Heart left ventricle (tissue), 16 donors: ENCODE measurements at regions of chr11 and their contacts with region 1.

Region 1: DNA sequence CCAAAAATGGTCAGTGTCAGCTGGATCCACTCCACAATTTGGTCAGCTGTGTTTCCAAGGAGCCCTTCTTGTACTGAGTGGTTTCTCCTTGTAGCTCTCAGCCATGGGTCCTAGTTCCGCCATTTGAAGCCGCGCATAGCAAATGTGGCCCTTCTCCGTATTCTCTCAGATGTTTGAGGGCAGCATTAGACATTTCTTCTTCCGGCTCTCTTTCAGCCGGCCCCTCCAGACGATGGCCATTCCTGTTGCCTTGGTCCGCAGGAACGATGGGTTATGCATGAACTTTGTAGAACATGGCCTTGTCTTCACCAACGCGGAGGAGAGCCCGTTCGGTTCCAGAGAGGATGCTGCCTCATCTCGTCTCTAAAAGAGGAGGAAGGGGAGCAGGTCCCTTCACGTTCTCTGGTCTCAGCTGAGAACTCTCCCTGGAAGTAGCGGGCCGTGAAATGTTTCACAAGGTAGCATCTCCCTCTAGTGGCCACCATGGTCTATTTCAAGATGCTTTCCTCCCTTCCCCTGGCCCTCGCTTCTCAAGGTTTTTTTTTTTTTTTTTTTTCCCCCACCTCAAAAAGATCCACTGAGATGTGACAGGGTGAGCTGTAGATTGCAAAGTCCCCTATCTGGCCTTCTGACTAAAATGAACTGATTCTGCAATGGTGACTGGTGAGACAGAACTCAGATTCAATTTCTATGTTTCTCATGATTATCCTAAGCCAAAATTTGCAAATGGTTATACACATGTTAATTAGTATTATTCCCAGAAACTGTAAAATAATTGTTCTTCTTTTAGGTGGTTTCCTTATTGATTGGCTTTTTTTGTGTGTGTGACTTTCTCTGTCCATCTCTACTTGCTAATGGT is 19.8 kb upstream of the PLET1 start:
- DNase-seq: peak in 4 of 5 donors; percentile 67 to 74 (median 69)
- ATAC-seq: peak; percentile 68 to 92 (median 86)
- H3K4me3 ChIP-seq: peak overlapping the region; percentile 27 to 71 (median 54)
- H3K27ac ChIP-seq: peak overlapping the region in 6 of 12 donors; percentile 12 to 51 (median 30)
- H3K4me1 ChIP-seq: peaks cover 0 to 8% (median 0%) of the 10 kb centered on the region in 12 donors
- H3K27me3 ChIP-seq: no peaks in the 10 kb centered on the region
- CTCF ChIP-seq: peak; percentile 46 to 74 (median 64)
- POLR2A ChIP-seq: no peak

Region 2: GRCh38 chr11:111938687-111939160 is 341.8 kb before region 1 on chr11:
- intact Hi-C with region 1: loop called in 1 of 10 experiments (anchors 10 kb)
- DNase-seq: no peak
- ATAC-seq: peak in 2 of 4 donors; percentile 3 to 8
- H3K4me3 ChIP-seq: peak overlapping the region in 6 of 12 donors; percentile 3 to 85 (median 67)
- H3K27ac ChIP-seq: peak overlapping the region in 10 of 12 donors; percentile 45 to 86 (median 71)
- H3K4me1 ChIP-seq: peaks cover 0 to 65% (median 36%) of the 10 kb centered on the region in 12 donors
- H3K27me3 ChIP-seq: no peaks in the 10 kb centered on the region
- CTCF ChIP-seq: no peak
- POLR2A ChIP-seq: no peak

Region 3: DNA sequence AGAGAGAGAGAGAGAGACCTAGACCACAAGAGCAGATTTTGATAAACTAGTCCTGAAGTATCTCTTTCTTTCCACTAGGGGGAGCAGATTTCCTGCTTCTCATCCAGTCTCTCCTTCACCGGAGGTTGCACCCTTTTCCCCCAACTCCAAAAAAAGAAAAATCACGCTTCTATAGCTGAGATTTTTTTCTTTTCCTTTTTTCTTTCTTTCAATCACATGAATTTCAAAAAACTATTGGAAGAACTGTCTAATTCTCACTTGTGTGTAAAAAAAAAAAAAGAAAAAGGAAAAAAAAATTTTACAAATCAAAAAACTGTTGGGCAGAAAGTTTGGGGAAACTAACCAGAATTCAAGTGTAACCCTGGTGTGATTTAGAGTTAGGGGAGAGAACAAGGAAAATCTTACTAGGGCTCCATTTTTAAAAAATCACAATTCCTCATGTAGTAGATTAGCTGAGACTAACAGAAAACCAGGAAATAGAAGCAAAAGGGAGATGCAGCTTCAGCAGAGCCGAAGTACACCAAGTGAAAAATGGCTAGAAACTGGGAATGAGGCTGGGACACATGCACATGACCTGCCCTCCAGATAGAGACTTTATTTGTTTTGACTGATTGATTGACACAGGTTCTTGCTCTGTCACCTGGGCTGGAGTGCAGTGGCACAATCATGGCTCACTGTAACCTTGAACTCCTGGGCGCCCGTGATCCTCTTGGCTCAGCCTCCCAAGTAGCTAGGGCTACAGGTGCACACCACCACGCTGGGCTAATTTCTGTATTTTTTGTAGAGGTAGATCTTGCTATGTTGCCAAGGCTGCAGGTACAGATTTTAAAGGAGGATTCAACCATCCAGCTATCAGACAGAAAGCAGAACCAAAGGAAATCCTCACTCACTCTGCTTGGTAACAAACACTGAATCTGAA is 166.7 kb before region 1 on chr11:
- intact Hi-C with region 1: loop called in 9 of 10 experiments (anchors 2 to 10 kb)
- DNase-seq: no peak
- ATAC-seq: peak; percentile 57 to 82 (median 62)
- H3K4me3 ChIP-seq: peak overlapping the region in 3 of 12 donors; percentile 4 to 28 (median 18)
- H3K27ac ChIP-seq: no peak overlapping the region
- H3K4me1 ChIP-seq: peaks cover 0 to 5% (median 0%) of the 10 kb centered on the region in 12 donors
- H3K27me3 ChIP-seq: no peaks in the 10 kb centered on the region
- CTCF ChIP-seq: peak; percentile 50 to 78 (median 64)
- POLR2A ChIP-seq: no peak

Region 4: DNA sequence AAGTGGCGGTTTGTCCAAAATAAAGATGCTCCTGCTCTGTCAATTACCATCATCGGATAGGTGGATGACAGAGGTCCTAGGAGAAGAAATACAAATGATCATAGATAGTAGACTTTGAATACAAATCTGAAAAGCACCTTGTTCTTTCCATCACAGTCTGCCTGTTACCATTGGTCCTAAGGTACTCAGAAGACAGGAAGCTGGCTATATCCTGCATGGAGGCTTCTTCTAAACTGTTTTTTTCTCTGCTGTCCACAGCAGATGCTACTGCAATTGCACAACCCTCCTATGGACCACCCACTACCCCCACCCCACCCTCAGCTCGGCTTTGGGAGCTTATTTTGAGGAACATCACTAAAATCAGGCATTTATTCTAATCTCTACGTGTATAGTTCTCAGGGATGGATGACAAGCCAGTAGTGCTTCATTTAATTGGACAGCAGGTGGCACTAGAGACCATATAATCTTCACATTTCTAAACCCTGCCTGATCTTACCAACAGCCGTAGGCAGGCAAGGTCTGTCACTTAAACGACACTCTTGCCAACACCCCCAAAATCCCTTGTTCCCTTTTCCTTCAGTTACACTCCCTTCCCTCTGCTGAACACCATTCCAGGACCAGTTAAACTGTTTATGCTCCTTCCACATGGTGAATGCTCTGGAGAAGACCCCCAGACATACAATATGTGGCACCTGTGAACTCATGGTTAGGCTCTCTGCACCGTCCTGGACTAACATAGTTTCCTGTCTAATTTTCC is 60.8 kb before region 1 on chr11:
- intact Hi-C with region 1: loop called (anchors 1 to 2 kb)
- DNase-seq: peak in 2 of 5 donors; percentile 28 to 29
- ATAC-seq: peak; percentile 57 to 92 (median 90)
- H3K4me3 ChIP-seq: no peak overlapping the region
- H3K27ac ChIP-seq: no peak overlapping the region
- H3K4me1 ChIP-seq: peaks cover 0 to 5% (median 0%) of the 10 kb centered on the region in 12 donors
- H3K27me3 ChIP-seq: no peaks in the 10 kb centered on the region
- CTCF ChIP-seq: peak; percentile 61 to 84 (median 74)
- POLR2A ChIP-seq: no peak

Region 5: DNA sequence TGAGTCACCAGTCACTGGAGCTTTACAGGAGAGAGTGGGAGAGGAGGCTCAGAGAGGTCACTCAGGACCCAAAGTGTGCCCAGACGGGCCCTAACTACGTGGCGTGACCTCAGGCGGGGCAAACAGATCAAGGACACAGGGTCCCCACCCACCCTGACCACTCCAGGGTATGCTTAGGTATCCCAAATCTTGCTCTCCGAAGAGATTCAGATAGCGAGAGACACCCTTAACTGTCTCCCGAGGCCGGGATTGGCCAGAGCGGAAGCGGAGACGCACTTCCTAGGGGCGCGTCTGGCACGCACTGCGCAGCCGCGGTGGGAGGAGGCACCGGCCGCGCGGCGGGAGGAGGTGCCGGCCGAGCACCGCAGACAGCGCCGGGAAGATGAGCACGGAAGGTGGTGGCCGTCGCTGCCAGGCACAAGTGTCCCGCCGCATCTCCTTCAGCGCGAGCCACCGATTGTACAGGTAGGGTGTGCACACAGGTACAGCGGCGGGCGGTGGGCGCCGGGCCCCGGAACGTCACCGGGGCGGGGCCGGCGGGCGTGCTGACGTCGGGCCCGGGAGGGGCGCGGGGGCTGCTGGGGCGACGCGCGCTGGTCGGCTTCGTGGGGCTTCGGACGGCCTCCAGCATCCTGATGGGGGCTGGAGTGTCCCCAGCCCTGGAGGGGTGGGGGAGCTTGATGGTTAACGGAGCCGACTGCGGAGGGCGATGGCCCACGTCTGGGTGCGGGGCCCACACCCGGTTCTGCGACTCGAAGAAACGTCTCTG is 54.3 kb before region 1 on chr11 and contains the start of gene PTS:
- intact Hi-C with region 1: loop called in 3 of 10 experiments (anchors 2 kb)
- DNase-seq: peak; percentile 89 to 94 (median 91)
- ATAC-seq: peak; percentile 96 to 98 (median 98)
- H3K4me3 ChIP-seq: peak within 1 kb of the TSS; percentile 52 to 91 (median 86)
- H3K27ac ChIP-seq: peak within 1 kb of the TSS; percentile 87 to 100 (median 98)
- H3K4me1 ChIP-seq: peaks cover 0 to 17% (median 7%) of the 10 kb centered on the region in 12 donors
- H3K27me3 ChIP-seq: no peaks in the 10 kb centered on the region
- CTCF ChIP-seq: no peak
- POLR2A ChIP-seq: peak in 1 of 2 donors; percentile 89
- total RNA-seq, gene PTS: 21.6 to 45.8 (median 29.9) TPM

Region 6: GRCh38 chr11:112453601-112454577 is 173.4 kb after region 1 on chr11:
- intact Hi-C with region 1: loop called in 2 of 10 experiments (anchors 5 to 10 kb)
- DNase-seq: peak in 2 of 5 donors; percentile 44 to 51
- ATAC-seq: peak in 3 of 4 donors; percentile 37 to 61 (median 48)
- H3K4me3 ChIP-seq: no peak overlapping the region
- H3K27ac ChIP-seq: no peak overlapping the region
- H3K4me1 ChIP-seq: peaks cover 0 to 3% (median 0%) of the 10 kb centered on the region in 12 donors
- H3K27me3 ChIP-seq: no peaks in the 10 kb centered on the region
- CTCF ChIP-seq: peak; percentile 24 to 52 (median 32)
- POLR2A ChIP-seq: no peak

Region 7: DNA sequence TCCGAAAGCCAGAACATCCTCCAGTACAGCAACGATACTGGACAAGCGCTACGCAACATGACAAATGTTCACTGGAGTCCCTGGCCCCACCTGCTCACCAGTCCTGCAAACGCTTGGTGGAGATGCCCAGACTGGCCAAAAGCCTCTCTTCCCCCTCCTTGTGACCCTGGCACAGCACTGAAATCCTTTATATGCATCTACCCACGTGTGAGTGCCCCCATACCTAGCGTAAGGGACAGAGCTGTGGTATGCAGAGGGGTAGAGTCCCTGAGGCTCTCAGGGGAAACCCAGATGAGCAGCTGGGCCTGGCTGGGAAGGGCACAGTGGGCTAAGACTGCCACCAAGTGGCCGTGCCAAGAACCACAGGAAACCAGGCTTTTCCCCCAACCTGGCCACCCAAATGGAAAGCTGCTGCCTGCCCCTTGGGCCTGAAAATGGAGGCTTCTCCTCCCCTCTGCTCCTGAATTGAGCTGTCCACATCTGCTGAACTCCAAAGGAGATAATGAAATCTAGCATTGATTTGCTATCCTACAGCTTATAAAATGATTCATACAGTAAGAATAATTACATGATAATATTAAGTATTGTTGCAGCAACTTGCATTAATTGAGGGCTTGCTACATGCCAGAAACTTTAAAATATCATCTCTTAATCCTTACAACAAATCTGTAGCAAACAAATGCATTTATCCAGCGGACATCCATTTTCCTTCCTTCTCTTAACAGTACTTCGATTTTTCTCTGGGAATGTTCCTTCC is 1009.1 kb after region 1 on chr11:
- intact Hi-C with region 1: loop called in 5 of 10 experiments (anchors 5 to 10 kb)
- DNase-seq: peak; percentile 42 to 77 (median 54)
- ATAC-seq: peak; percentile 73 to 79 (median 77)
- H3K4me3 ChIP-seq: no peak overlapping the region
- H3K27ac ChIP-seq: no peak overlapping the region
- H3K4me1 ChIP-seq: peaks cover 0 to 9% (median 0%) of the 10 kb centered on the region in 12 donors
- H3K27me3 ChIP-seq: peaks cover 0 to 8% (median 0%) of the 10 kb centered on the region in 9 donors
- CTCF ChIP-seq: peak; percentile 79 to 93 (median 88)
- POLR2A ChIP-seq: no peak